GM10248 (cell line): ENCODE measurements at regions of chr7 and their contacts with region 1.

Region 1: DNA sequence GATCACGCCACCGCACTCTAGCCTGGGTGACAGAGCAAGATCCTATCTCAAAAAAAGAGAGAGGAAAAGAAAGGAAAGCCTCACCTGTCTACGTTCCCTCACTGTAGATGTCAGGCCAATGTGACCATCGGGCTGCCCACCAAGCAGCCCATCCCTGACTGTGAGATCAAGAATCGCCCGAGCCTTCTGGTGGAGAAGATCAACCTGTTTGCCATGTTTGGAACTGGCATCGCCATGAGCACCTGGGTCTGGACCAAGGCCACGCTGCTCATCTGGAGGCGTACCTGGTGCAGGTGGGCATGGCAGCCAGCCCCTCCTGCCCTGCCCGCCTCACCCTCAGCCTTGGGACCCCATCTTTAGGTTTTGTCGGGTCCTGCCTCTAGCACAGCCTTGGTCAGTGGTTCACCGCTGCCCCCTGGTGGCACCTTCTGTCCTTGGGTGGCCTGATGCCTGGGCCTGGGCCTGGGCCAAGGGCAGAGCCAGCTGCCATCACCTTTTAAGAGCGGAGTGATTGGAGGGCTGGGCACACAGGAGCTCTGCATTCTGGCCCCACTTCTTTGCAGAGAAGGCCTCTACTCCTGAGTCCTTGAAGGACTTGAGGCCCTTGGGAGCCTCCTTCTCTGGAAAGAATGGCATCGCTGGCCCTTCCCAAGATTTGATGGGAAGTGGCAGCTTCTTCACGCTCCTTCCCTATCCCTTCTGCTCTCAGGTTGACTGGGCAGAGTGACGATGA is 14.4 kb upstream of the AHCYL2 start:
- DNase-seq: peak; percentile 88
- CTCF ChIP-seq: peak; percentile 96

Region 2: DNA sequence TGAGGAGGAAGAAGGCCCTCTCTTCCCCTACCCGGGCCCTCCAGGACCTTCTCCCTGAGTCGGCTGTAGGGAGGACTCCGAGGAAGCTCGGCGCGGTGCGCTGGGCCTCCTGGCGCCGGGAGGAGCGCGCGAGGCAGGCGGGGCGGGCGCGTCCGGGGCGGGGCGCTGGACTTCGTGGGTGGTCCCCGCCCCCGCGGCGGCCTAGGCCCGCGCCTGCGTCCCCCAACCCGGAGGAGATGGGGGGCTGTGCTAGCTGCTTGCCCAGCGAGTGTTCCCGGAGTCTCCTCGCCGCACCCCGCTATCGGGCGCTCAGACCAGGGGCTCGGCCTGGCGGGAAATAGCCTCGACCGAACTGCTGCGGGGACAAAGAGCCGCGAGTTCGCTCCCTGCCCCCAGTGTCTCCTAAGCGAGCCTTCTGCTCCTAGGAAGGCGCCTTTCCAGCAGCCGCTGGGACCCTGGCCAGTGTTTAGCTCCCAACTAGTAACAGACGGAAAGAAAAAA is 41.2 kb before region 1 on chr7:
- CTCF ChIA-PET with region 1: interaction called, 46 read pairs
- POLR2A ChIA-PET with region 1: no interaction called
- DNase-seq: peak; percentile 69
- CTCF ChIP-seq: no peak

Region 3: GRCh38 chr7:129197771-129198170 is 12.7 kb before region 1 on chr7:
- CTCF ChIA-PET with region 1: interaction called, 18 read pairs
- POLR2A ChIA-PET with region 1: no interaction called
- DNase-seq: no peak
- CTCF ChIP-seq: no peak

Region 4: GRCh38 chr7:129298268-129298893 is 88.0 kb after region 1 on chr7:
- CTCF ChIA-PET with region 1: interaction called, 144 read pairs
- POLR2A ChIA-PET with region 1: no interaction called
- DNase-seq: peak; percentile 62
- CTCF ChIP-seq: peak; percentile 74

Region 5: DNA sequence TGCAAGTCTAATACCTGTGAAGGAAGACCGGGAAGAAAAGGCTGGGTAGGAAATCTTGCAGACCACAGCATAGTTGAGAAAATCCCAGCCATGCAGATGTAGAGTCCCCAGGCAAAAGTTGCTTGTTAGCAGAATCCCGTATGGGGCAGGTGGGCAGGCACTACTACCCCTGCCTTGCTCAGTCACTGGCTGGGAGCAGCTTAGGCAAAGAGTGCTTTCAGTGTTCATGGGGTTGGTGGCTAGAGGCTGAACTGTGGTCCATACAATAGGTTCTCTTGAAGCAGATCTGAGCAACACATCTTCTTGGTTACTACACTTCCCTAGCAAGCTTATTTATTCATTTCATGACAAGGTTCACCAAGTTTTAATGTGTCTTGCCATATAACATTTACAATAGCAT is 107.0 kb after region 1 on chr7:
- CTCF ChIA-PET with region 1: no interaction called
- POLR2A ChIA-PET with region 1: no interaction called
- DNase-seq: no peak
- CTCF ChIP-seq: no peak